Transverse colon (tissue), 4 donors: ENCODE measurements at regions of chr11 and their contacts with region 1.

Region 1: DNA sequence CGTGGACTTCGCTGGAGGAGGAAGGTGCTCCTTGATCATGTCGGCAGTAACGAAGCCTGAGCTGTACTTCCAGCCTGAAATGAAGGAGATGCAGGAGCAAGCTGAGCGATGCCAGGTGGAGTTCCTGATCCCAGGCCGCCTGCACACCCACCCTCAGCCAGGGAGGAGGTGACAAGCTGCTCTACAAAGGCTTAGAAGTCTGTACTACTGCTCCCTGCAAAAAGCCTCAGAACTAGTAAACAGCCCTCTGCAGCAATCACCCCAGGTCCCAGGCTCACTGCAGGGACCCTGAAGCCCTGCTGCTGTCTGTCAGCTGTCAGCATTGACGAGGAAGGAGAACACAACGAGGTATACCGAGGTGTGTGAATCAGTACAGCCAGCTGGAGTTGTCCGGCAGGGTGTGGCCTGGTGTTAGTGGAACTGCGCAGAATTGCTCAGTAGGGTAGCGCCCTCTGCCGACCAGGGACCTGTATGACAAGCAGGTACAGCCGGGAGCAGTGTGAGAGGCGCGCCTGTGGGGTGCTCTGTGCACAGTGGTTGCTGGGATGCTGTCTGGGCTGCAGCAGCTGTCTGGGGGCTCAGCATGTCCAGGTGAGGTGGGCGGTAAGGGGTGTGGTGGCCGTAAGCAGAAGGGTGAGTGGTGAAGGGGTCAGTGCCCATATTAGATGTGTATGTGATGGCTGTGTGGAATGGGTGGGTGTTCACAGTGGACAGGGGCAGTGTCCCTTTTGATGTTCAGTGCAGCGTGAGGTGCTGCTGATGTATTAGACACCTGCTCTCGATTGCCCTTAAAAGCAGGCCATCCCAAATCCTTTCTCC is 7.6 kb downstream of the CYB5R2 start:
- DNase-seq: peak; percentile 89
- H3K4me3 ChIP-seq: no peak overlapping the region
- H3K27ac ChIP-seq: peak overlapping the region in 1 of 4 donors; percentile 13
- H3K4me1 ChIP-seq: peaks cover 0 to 3% (median 0%) of the 10 kb centered on the region in 4 donors
- H3K27me3 ChIP-seq: no peaks in the 10 kb centered on the region
- CTCF ChIP-seq: peak; percentile 81 to 93 (median 86)
- EP300 ChIP-seq: no peak
- POLR2A ChIP-seq: no peak

Region 2: DNA sequence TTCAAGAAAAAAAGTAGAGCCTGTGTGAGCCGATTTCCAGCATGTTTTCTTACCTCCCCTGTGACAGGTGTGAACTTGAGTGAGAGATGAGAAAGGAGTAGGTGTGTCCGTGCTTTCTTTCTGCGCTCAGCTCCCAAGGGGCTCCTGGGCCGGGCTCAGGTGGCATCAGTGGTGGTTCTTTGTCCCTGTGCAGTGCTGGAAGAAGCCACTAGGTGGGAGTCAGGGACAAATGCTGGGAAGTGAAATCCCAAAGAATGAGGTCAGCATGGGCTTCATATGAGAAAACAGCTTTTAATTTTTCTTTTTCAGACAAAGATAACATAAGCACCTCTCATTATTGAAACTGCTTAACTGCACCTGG is 94.1 kb before region 1 on chr11:
- in situ Hi-C with region 1: loop called in 3 of 4 experiments (anchors 5 to 25 kb)
- intact Hi-C with region 1: no loop called
- DNase-seq: peak; percentile 82
- H3K4me3 ChIP-seq: no peak overlapping the region
- H3K27ac ChIP-seq: peak overlapping the region; percentile 86 to 92 (median 88)
- H3K4me1 ChIP-seq: peaks cover 40 to 54% (median 50%) of the 10 kb centered on the region in 4 donors
- H3K27me3 ChIP-seq: no peaks in the 10 kb centered on the region
- CTCF ChIP-seq: peak; percentile 88 to 96 (median 94)
- EP300 ChIP-seq: no peak
- POLR2A ChIP-seq: no peak